PC-9 (cell line): ENCODE measurements at regions of chr2 and their contacts with region 1.

Region 1: GRCh38 chr2:177148477-177149154 is 64.0 kb upstream of the HNRNPA3 start:
- DNase-seq: peak; percentile 76 to 86
- H3K4me3 ChIP-seq: peak overlapping the region; percentile 46
- H3K27ac ChIP-seq: no peak overlapping the region
- H3K4me1 ChIP-seq: peaks cover 8% of the 10 kb centered on the region
- H3K27me3 ChIP-seq: peaks cover 13% of the 10 kb centered on the region
- CTCF ChIP-seq: peak; percentile 97

Region 2: DNA sequence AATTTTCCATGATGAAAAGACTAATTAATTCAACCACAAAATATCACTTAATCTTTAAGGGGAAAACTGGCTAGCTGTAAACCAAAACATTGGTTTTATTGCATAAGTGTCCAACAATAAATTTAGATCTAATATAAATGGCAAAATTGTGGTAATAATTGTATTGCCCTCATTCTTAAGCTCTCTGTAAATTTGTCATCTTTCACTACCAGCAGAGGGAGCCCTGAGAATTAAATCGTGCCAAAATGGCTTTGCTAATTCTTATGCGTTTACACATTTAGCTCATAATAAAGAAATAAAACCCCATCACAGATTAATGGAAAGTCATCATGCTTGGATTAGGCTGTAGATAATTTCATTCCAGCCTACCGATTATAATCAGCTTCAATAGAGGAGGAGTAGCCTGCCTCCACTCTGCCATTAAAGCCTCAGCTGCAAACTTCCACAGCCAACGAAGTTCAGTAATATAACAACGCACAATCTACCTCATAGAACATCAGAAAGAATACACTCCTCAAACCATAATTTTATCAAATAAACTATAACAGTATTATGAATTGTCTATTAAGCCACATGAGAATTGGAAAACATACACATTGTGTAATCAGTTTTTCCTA is 1897.1 kb before region 1 on chr2:
- CTCF ChIA-PET with region 1: interaction called, 8 read pairs
- POLR2A ChIA-PET with region 1: no interaction called
- intact Hi-C with region 1: loop called (anchors 5 kb)
- DNase-seq: peak; percentile 17 to 47
- H3K4me3 ChIP-seq: no peak overlapping the region
- H3K27ac ChIP-seq: no peak overlapping the region
- H3K4me1 ChIP-seq: no peaks in the 10 kb centered on the region
- H3K27me3 ChIP-seq: peaks cover 12% of the 10 kb centered on the region; the same call in 1 of the 2 replicates
- CTCF ChIP-seq: peak; percentile 89

Region 3: GRCh38 chr2:176110975-176111663 is 1037.5 kb before region 1 on chr2:
- CTCF ChIA-PET with region 1: interaction called, 3 read pairs
- POLR2A ChIA-PET with region 1: no interaction called
- intact Hi-C with region 1: loop called (anchors 5 kb)
- DNase-seq: peak in 1 of 2 experiments; percentile 46
- H3K4me3 ChIP-seq: no peak overlapping the region
- H3K27ac ChIP-seq: no peak overlapping the region
- H3K4me1 ChIP-seq: no peaks in the 10 kb centered on the region
- H3K27me3 ChIP-seq: peaks cover 53% of the 10 kb centered on the region
- CTCF ChIP-seq: peak; percentile 80

Region 4: GRCh38 chr2:176140513-176141317 is 1007.9 kb before region 1 on chr2:
- CTCF ChIA-PET with region 1: no interaction called
- POLR2A ChIA-PET with region 1: interaction called, 3 read pairs
- intact Hi-C with region 1: loop called (anchors 5 kb)
- DNase-seq: peak in 1 of 2 experiments; percentile 60
- H3K4me3 ChIP-seq: no peak overlapping the region
- H3K27ac ChIP-seq: no peak overlapping the region
- H3K4me1 ChIP-seq: no peaks in the 10 kb centered on the region
- H3K27me3 ChIP-seq: peaks cover 29% of the 10 kb centered on the region; the same call in 1 of the 2 replicates
- CTCF ChIP-seq: peak; percentile 44

Region 5: GRCh38 chr2:176638167-176639015 is 510.2 kb before region 1 on chr2:
- CTCF ChIA-PET with region 1: no interaction called
- POLR2A ChIA-PET with region 1: no interaction called
- intact Hi-C with region 1: loop called (anchors 2 kb)
- DNase-seq: peak in 1 of 2 experiments; percentile 78
- H3K4me3 ChIP-seq: peak overlapping the region; percentile 37; the same call in 1 of the 2 replicates
- H3K27ac ChIP-seq: no peak overlapping the region
- H3K4me1 ChIP-seq: no peaks in the 10 kb centered on the region
- H3K27me3 ChIP-seq: no peaks in the 10 kb centered on the region; the same call in 1 of the 2 replicates
- CTCF ChIP-seq: peak; percentile 81

Region 6: DNA sequence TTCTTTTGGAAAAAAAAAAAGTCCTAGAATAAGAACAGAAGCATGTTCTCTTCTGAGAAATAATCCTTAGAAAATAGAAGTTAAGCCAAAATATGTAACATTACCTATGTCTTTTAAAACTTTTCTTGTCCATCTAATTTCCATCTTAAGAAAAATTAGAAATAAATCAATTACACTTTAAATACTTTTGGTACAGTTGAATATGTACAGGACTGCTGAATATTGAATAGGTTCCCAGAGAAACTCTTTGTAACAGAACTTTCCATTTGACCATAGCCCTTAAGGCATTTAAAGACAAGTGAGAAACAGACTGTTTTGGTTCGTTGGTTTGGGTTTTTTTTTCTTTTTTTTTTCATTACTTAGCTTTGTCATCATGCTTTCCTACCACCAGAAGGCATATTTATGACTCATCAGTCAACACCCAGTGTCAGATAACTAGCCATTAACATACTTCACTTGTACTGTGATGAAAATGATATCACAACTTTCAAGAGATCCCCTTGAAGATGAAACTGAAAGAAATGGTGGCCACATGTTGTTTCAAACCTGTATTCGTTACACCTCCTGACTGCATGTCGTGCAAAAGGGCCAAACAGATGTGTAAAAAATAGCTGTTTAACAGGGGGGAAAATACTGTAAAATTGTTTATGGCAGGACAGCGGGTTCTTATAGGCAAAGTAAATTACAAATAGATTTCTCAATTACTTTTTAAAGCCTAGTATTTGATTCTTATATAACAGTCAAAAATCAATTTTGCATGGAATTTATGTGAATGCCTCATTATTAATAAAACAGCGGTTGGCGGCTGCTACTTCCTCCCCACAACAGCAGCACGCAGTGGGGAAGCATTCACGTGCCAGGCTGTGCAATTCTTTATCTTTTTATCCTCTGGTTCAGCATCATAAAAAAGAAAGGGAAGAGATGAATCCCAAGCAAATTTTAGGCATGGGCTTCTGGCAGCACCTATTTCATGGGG is 216.7 kb before region 1 on chr2:
- CTCF ChIA-PET with region 1: no interaction called
- POLR2A ChIA-PET with region 1: no interaction called
- intact Hi-C with region 1: loop called (anchors 5 kb)
- DNase-seq: peak in 1 of 2 experiments; percentile 49
- H3K4me3 ChIP-seq: no peak overlapping the region
- H3K27ac ChIP-seq: no peak overlapping the region
- H3K4me1 ChIP-seq: no peaks in the 10 kb centered on the region
- H3K27me3 ChIP-seq: no peaks in the 10 kb centered on the region
- CTCF ChIP-seq: no peak

Region 7: GRCh38 chr2:177758591-177759371 is 610.2 kb after region 1 on chr2:
- CTCF ChIA-PET with region 1: interaction called, 3 read pairs
- POLR2A ChIA-PET with region 1: no interaction called
- intact Hi-C with region 1: loop called (anchors 2 kb)
- DNase-seq: peak in 1 of 2 experiments; percentile 53
- H3K4me3 ChIP-seq: no peak overlapping the region
- H3K27ac ChIP-seq: no peak overlapping the region
- H3K4me1 ChIP-seq: no peaks in the 10 kb centered on the region
- H3K27me3 ChIP-seq: no peaks in the 10 kb centered on the region
- CTCF ChIP-seq: peak; percentile 76